Body of pancreas (tissue), 4 donors: ENCODE measurements at regions of chr5 and their contacts with region 1.

Region 1: GRCh38 chr5:95835682-95836385 is 13.3 kb upstream of the GLRX start:
- DNase-seq: peak in 1 of 4 donors; percentile 21
- ATAC-seq: no peak
- H3K4me3 ChIP-seq: no peak overlapping the region
- H3K27ac ChIP-seq: peak overlapping the region; percentile 4 to 97 (median 92)
- H3K4me1 ChIP-seq: peaks cover 35% of the 10 kb centered on the region
- H3K27me3 ChIP-seq: no peaks in the 10 kb centered on the region
- CTCF ChIP-seq: no peak
- POLR2A ChIP-seq: no peak

Region 2: DNA sequence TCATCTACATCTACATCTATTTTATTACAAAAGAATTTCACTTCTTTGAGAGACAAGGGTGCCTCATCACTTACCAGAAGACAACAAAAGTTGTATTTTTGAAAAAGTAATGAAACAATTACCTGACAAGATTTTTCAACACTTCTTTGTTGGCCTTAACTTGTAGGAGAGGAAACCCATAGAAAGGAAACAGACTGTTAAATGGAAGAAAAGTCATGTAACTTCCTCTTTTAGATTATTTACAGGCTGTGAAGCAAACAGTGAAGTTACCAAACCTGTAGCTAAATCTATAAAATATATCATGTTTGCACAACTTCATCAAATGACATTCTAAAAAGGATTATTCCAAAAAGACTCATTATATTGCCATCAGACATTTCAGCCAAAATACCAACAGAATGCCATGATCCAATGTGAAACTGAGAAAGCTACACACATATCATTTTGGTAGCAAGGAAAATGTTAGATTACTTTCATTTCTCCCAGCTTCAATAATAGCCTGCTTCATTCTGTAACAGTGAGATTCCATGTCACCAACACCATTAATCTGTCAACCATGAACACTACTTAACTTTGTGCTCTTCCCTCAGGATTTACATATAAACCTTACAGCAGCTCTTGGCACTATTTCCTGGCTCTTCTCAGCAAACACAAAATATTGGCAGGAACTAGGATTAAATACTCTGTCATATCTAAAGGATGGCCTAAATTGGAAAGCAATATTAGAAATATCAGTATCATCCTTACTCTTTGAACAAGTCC is 673.4 kb before region 1 on chr5:
- intact Hi-C with region 1: no loop called
- DNase-seq: no peak
- ATAC-seq: no peak
- H3K4me3 ChIP-seq: no peak overlapping the region
- H3K27ac ChIP-seq: no peak overlapping the region
- H3K4me1 ChIP-seq: peaks cover 5% of the 10 kb centered on the region
- H3K27me3 ChIP-seq: no peaks in the 10 kb centered on the region
- CTCF ChIP-seq: no peak
- POLR2A ChIP-seq: no peak

Region 3: GRCh38 chr5:95565280-95565920 is 270.4 kb before region 1 on chr5:
- intact Hi-C with region 1: no loop called
- DNase-seq: no peak
- ATAC-seq: no peak
- H3K4me3 ChIP-seq: no peak overlapping the region
- H3K27ac ChIP-seq: no peak overlapping the region
- H3K4me1 ChIP-seq: no peaks in the 10 kb centered on the region
- H3K27me3 ChIP-seq: no peaks in the 10 kb centered on the region
- CTCF ChIP-seq: no peak
- POLR2A ChIP-seq: no peak

Region 4: DNA sequence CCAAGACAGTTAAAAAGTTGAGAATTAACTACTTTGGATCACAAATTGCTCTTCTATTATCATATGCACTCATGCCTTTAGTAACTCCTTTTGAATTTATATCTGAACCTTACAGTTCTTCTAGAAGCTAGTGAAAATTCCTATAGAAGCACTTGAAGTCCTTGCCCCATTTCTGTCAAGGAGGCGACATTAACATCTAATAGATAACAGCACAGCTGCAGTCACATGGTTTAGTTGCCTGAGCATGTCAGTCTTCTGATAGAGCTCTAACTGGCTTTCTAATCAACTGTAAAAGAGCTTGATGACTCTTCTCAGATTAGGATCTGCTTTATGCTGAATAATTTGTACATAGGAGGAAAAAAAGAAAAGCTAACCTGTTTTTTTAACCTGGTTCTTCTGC is 180.3 kb before region 1 on chr5:
- intact Hi-C with region 1: loop called (anchors 10 kb)
- DNase-seq: no peak
- ATAC-seq: no peak
- H3K4me3 ChIP-seq: no peak overlapping the region
- H3K27ac ChIP-seq: no peak overlapping the region
- H3K4me1 ChIP-seq: peaks cover 5% of the 10 kb centered on the region
- H3K27me3 ChIP-seq: no peaks in the 10 kb centered on the region
- CTCF ChIP-seq: no peak
- POLR2A ChIP-seq: no peak

Region 5: GRCh38 chr5:95669540-95669939 is 166.3 kb before region 1 on chr5:
- intact Hi-C with region 1: no loop called
- DNase-seq: peak; percentile 29 to 70 (median 52)
- ATAC-seq: peak; percentile 74
- H3K4me3 ChIP-seq: no peak overlapping the region
- H3K27ac ChIP-seq: no peak overlapping the region
- H3K4me1 ChIP-seq: peaks cover 9% of the 10 kb centered on the region
- H3K27me3 ChIP-seq: no peaks in the 10 kb centered on the region
- CTCF ChIP-seq: no peak
- POLR2A ChIP-seq: no peak

Region 6: GRCh38 chr5:95783661-95784060 is 52.2 kb before region 1 on chr5:
- intact Hi-C with region 1: loop called (anchors 2 kb)
- DNase-seq: no peak
- ATAC-seq: no peak
- H3K4me3 ChIP-seq: no peak overlapping the region
- H3K27ac ChIP-seq: no peak overlapping the region
- H3K4me1 ChIP-seq: peaks cover 28% of the 10 kb centered on the region
- H3K27me3 ChIP-seq: no peaks in the 10 kb centered on the region
- CTCF ChIP-seq: no peak
- POLR2A ChIP-seq: no peak